ENCODE measurements at regions of chr6 and their contacts with region 1.

Region 1: DNA sequence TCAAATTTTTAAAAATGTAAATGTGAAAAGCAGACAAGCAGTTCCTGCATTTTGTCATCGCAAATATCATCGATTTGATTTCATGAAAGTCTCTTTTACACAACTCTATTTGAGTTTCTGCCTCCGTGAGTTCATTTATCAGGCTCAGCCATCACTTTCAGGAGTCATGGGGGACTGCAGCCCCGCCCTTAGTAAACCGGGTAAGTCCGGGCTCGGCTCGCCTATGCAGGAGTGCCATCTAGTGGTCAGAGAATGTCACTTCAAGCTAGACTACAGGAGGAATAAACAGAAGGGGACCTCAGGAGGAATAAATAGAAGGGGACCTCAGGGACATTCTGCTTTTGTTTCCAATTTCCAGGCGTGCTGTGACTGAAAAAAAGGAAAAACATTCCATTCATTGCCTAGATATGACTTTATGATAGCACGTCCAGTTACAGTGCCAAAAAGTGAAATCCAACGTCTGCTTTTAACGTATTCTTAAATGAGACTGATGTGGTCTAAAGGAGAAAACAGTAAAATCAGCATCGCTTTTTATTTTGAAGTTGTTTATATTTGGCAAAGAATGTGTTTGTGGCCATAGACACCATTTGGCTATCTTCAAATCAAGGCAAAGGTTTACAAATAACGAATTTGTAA is 333.9 kb downstream of the HACE1 start:
- DNase-seq: peak; percentile 74
- H3K4me3 ChIP-seq: peak overlapping the region; percentile 38 to 46; a peak in 3 of 4 replicates
- H3K27ac ChIP-seq: peak overlapping the region in 1 of 2 experiments; percentile 58; a peak in 2 of 4 replicates
- H3K4me1 ChIP-seq: peaks cover 0 to 3% of the 10 kb centered on the region in 2 experiments; a peak in 2 of 4 replicates
- H3K27me3 ChIP-seq: no peaks in the 10 kb centered on the region
- CTCF ChIP-seq: peak; percentile 97
- EP300 ChIP-seq: no peak
- RAD21 ChIP-seq: peak; percentile 97

Region 2: DNA sequence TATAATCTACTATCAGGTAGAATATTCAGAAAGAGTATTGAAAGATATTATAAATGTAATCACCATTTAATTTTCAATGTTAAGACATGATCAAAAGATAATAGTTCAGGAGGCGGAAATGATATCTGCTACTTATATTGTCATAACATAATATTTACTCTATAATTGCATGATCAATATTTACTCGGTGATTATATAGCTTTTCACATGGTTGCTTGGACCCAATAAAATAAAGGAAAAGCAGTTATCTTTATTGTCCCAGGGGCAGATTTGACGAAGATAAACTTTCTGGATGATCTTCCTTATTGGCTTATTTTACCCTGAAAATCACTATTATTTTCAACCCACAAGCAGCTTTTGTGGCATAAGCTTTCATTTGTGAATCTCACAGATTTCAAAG is 16.4 kb before region 1 on chr6:
- CTCF ChIA-PET with region 1: interaction called, 18 read pairs
- POLR2A ChIA-PET with region 1: no interaction called
- DNase-seq: no peak
- H3K4me3 ChIP-seq: no peak overlapping the region
- H3K27ac ChIP-seq: no peak overlapping the region
- H3K4me1 ChIP-seq: peaks cover 0 to 3% of the 10 kb centered on the region in 2 experiments; a peak in 1 of 4 replicates
- H3K27me3 ChIP-seq: no peaks in the 10 kb centered on the region
- CTCF ChIP-seq: no peak
- EP300 ChIP-seq: no peak
- RAD21 ChIP-seq: no peak

Region 3: GRCh38 chr6:104537180-104537579 is 11.4 kb after region 1 on chr6:
- CTCF ChIA-PET with region 1: interaction called, 29 read pairs
- POLR2A ChIA-PET with region 1: no interaction called
- DNase-seq: no peak
- H3K4me3 ChIP-seq: no peak overlapping the region
- H3K27ac ChIP-seq: peak overlapping the region; percentile 3 to 57; a peak in 3 of 4 replicates
- H3K4me1 ChIP-seq: 0 out of 4 replicates have a peak, but pooled peaks cover 0 to 3% of the 10 kb centered on the region in 2 experiments
- H3K27me3 ChIP-seq: no peaks in the 10 kb centered on the region
- CTCF ChIP-seq: no peak
- EP300 ChIP-seq: peak in 1 of 2 experiments; percentile 18; a peak in 1 of 4 replicates
- RAD21 ChIP-seq: no peak

Region 4: GRCh38 chr6:104771258-104771832 is 245.6 kb after region 1 on chr6:
- CTCF ChIA-PET with region 1: interaction called, 11 read pairs
- POLR2A ChIA-PET with region 1: no interaction called
- DNase-seq: peak; percentile 39
- H3K4me3 ChIP-seq: no peak overlapping the region; a peak in 1 of 4 replicates
- H3K27ac ChIP-seq: no peak overlapping the region
- H3K4me1 ChIP-seq: no peaks in the 10 kb centered on the region; a peak in 1 of 4 replicates
- H3K27me3 ChIP-seq: no peaks in the 10 kb centered on the region
- CTCF ChIP-seq: peak; percentile 79
- EP300 ChIP-seq: no peak
- RAD21 ChIP-seq: peak; percentile 81

Region 5: GRCh38 chr6:104837158-104837557 is 311.4 kb after region 1 on chr6:
- CTCF ChIA-PET with region 1: no interaction called
- POLR2A ChIA-PET with region 1: no interaction called
- DNase-seq: no peak
- H3K4me3 ChIP-seq: no peak overlapping the region
- H3K27ac ChIP-seq: no peak overlapping the region
- H3K4me1 ChIP-seq: no peaks in the 10 kb centered on the region
- H3K27me3 ChIP-seq: no peaks in the 10 kb centered on the region
- CTCF ChIP-seq: no peak
- EP300 ChIP-seq: no peak
- RAD21 ChIP-seq: no peak